Gastrocnemius medialis (tissue), 4 donors: ENCODE measurements at regions of chr5 and their contacts with region 1.

Region 1: DNA sequence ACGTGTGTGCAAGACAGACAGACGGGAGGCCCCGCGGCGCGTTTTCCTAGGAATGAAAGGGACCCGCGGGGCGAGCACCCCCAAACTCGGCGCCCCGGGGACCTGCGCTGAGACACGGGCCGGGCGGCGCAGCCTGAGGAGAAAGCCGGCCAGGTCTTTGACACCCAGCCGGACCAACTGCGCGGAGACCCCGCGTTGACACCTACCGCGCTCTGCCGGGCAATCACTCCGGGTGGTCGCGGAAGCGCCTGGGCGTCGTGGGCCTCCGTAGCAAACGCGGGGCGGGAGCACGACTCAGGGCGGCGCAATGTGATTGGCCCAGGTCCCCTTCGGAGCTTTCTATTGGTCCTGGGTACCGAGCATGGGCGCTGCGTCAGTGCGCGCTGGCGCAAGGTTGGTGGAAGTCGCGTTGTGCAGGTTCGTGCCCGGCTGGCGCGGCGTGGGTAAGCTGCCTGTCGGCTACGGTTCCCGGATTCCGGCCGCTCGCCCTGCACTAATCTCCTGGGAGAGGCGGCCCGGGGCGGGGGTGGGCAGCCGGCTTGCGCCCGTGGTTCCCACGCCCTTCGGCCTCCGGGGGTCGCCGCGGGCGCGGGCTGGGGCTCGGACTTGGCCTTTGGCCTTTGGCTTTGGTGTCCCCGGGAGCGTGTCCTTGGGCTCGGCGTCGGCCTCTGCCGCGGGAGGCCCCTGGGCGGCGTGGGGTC is at the starts of genes FASTKD3 and MTRR:
- DNase-seq: peak; percentile 93
- ATAC-seq: peak; percentile 99 to 100
- H3K4me3 ChIP-seq: peak within 1 kb of the TSS; percentile 86 to 99 (median 96)
- H3K27ac ChIP-seq: peak within 1 kb of the TSS; percentile 89 to 95 (median 93)
- H3K4me1 ChIP-seq: peaks cover 28 to 37% of the 10 kb centered on the region in 2 donors
- H3K27me3 ChIP-seq: no peaks in the 10 kb centered on the region
- CTCF ChIP-seq: peak in 2 of 5 experiments; percentile 5 to 14
- POLR2A ChIP-seq: peak; percentile 83 to 89
- total RNA-seq, gene FASTKD3: 6.8 to 9.4 (median 7.3) TPM
- total RNA-seq, gene MTRR: 27.9 to 75.1 (median 50.8) TPM

Region 2: DNA sequence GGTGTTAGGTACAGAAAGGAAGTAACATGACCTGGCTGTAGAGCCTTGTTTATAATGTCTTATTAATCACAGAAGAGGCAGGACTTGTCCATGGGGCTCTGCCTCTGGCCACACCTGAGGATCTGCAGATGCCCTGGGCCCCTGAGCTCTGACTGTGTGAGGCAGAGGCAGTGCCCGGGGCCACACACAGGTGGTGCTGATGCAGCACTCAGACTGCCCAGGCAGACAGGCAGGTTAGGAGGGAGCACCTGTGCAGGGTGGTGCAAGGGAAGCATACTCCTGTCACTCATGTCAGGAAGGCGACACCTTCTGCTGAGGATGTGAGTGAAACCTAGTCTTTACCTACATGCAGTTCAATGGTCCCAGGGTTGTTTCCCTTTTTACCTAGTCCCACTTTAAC is 106.7 kb before region 1 on chr5:
- in situ Hi-C with region 1: no loop called
- intact Hi-C with region 1: loop called (anchors 5 kb)
- DNase-seq: peak in 1 of 2 donors; percentile 53
- ATAC-seq: no peak
- H3K4me3 ChIP-seq: no peak overlapping the region
- H3K27ac ChIP-seq: peak overlapping the region; percentile 78 to 89 (median 84)
- H3K4me1 ChIP-seq: peaks cover 14 to 50% of the 10 kb centered on the region in 2 donors
- H3K27me3 ChIP-seq: no peaks in the 10 kb centered on the region
- CTCF ChIP-seq: peak in 2 of 5 experiments; percentile 26 to 31
- POLR2A ChIP-seq: no peak

Region 3: DNA sequence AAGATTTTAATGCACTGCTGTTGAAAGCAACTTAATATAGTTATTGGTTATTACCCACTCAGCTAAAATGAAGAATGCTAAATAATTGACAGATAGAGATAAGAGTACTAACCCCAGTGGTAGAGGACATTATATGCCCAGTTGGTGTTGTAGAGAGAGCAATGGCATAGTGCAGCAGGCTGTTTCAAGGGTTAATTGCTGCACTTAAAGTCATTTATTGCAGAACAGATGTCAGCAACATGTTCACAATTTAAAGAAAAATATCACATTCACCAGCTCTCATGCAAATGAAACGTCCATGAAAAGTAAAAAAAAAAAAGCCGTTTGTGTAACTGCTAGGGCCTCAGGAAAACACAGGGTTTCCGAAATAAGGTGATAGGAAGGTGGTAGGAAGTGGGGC is 254.6 kb after region 1 on chr5:
- in situ Hi-C with region 1: no loop called
- intact Hi-C with region 1: no loop called
- DNase-seq: no peak
- ATAC-seq: no peak
- H3K4me3 ChIP-seq: no peak overlapping the region
- H3K27ac ChIP-seq: no peak overlapping the region
- H3K4me1 ChIP-seq: no peaks in the 10 kb centered on the region
- H3K27me3 ChIP-seq: no peaks in the 10 kb centered on the region
- CTCF ChIP-seq: no peak
- POLR2A ChIP-seq: no peak

Region 4: DNA sequence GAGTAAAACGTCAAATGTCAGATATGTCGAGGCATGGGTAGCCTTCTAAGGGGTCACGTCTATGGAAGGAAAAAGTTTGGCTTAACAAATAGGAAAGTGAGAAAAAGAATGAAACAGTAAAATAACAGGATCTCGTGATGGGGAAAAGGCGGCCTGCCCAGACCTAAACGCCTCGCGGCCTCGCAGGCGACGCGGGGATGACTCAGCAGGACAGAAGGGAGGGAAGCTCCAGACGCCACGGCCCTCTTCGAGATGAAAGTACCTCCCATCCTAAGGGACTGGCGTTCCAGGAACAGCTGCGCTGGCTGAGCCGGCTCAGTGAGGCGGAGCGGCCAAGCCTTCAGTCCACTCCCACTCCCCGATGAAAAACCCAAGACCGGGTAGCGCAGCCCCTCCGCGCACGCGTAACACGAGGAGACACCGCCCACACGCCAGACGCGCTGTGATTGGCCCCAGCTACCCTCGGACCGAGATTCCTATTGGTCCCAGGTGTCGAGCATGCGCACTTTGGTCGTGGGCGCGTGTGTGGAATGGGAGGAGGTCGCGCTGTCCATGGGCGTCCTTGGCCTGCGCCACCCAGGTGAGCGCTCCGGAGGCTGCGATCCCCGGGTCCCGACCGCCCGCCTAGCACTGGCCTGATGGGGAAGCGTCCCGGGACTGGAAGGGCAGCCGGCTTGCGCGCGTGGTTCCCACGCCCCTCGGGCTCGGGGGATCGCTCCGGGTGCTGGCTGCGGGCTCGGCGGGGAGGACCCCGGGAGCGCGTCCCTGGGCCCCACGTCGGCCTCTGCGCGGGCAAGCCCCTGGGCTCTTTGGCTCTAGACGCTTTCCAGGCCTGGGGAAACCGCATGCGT is 588.5 kb after region 1 on chr5:
- in situ Hi-C with region 1: loop called in 1 of 4 experiments (anchors 25 kb)
- intact Hi-C with region 1: no loop called
- DNase-seq: peak; percentile 90 to 92
- ATAC-seq: peak; percentile 94 to 96
- H3K4me3 ChIP-seq: peak overlapping the region; percentile 63 to 77 (median 68)
- H3K27ac ChIP-seq: peak overlapping the region; percentile 82 to 92 (median 85)
- H3K4me1 ChIP-seq: peaks cover 0 to 12% of the 10 kb centered on the region in 2 donors
- H3K27me3 ChIP-seq: no peaks in the 10 kb centered on the region
- CTCF ChIP-seq: no peak
- POLR2A ChIP-seq: peak; percentile 62 to 90